CD8-positive, alpha-beta memory T cell (primary cell): ENCODE measurements at regions of chr17 and their contacts with region 1.

Region 1: DNA sequence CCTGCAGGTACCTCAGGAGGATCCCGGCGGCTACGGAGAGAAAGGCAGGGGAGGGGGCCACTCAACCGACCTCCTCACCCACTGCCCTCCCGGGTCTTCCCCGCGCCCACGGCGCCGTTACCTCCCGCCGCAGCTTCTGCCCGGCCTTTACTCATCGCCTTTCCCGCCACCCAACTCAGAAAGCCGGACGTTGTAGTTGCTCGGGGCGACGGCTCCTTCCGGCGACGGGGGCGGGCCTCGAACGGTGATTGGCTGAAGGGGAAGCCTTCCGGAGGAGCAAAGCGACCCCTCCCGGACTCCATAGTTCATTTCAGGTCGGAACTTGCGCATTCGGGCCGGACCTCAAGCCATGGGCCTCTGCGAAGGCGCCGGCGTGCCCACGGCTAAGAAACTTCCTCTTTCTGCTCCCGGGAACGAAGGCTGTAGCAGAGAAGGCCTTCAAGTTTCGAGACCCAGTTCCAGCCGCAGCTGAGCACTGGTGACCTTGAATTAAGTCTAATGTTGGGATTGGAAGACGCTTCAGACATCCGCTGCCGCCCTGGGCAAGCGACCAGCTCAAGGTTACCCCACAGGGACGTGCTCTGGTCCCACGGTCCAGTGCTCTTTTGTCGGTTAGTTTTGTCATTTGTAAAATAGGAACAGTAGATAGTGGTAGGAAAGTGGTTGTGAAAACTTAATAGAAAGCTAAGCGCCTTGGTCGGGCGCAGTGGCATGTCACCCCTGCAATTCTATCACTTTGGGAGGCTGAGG is at the start of gene PSMC3IP:
- DNase-seq: peak; percentile 82 to 93 (median 89)
- H3K4me3 ChIP-seq: peak within 1 kb of the TSS; percentile 96
- H3K4me3 Mint-ChIP-seq: peak within 1 kb of the TSS; percentile 89 to 99 (median 98)
- H3K27ac ChIP-seq: peak within 1 kb of the TSS; percentile 85
- H3K27ac Mint-ChIP-seq: peak within 1 kb of the TSS; percentile 74 to 99 (median 97)
- H3K4me1 ChIP-seq: peaks cover 13% of the 10 kb centered on the region
- H3K4me1 Mint-ChIP-seq: peaks cover 30 to 34% (median 31%) of the 10 kb centered on the region in 3 donors
- H3K27me3 ChIP-seq: no peaks in the 10 kb centered on the region
- H3K27me3 Mint-ChIP-seq: peaks cover 0 to 1% of the 10 kb centered on the region in 2 donors
- total RNA-seq, gene PSMC3IP: 35.9 to 36.2 TPM

Region 2: GRCh38 chr17:42493319-42493718 is 84.4 kb before region 1 on chr17:
- CTCF ChIA-PET with region 1: no interaction called
- POLR2A ChIA-PET with region 1: no interaction called
- DNase-seq: no peak
- H3K4me3 ChIP-seq: no peak overlapping the region
- H3K4me3 Mint-ChIP-seq: no peak overlapping the region
- H3K27ac ChIP-seq: no peak overlapping the region
- H3K27ac Mint-ChIP-seq: no peak overlapping the region
- H3K4me1 ChIP-seq: peaks cover 2% of the 10 kb centered on the region
- H3K4me1 Mint-ChIP-seq: peaks cover 21 to 27% (median 21%) of the 10 kb centered on the region in 3 donors
- H3K27me3 ChIP-seq: no peaks in the 10 kb centered on the region
- H3K27me3 Mint-ChIP-seq: peaks cover 6 to 11% of the 10 kb centered on the region in 2 donors

Region 3: GRCh38 chr17:42548070-42548837 is 29.5 kb before region 1 on chr17:
- CTCF ChIA-PET with region 1: interaction called, 12 read pairs
- POLR2A ChIA-PET with region 1: interaction called, 3 read pairs
- DNase-seq: peak; percentile 57 to 83 (median 69)
- H3K4me3 ChIP-seq: no peak overlapping the region
- H3K4me3 Mint-ChIP-seq: peak overlapping the region in 4 of 7 donors; percentile 22 to 59 (median 43)
- H3K27ac ChIP-seq: no peak overlapping the region
- H3K27ac Mint-ChIP-seq: no peak overlapping the region
- H3K4me1 ChIP-seq: peaks cover 5% of the 10 kb centered on the region
- H3K4me1 Mint-ChIP-seq: peaks cover 10 to 25% (median 14%) of the 10 kb centered on the region in 3 donors
- H3K27me3 ChIP-seq: no peaks in the 10 kb centered on the region
- H3K27me3 Mint-ChIP-seq: no peaks in the 10 kb centered on the region

Region 4: GRCh38 chr17:42566883-42567573 is 10.7 kb before region 1 on chr17 and contains the start of gene MLX:
- CTCF ChIA-PET with region 1: interaction called, 23 read pairs
- POLR2A ChIA-PET with region 1: interaction called, 12 read pairs
- DNase-seq: peak; percentile 89 to 95 (median 91)
- H3K4me3 ChIP-seq: peak within 1 kb of the TSS; percentile 78
- H3K4me3 Mint-ChIP-seq: peak within 1 kb of the TSS; percentile 93 to 96 (median 95)
- H3K27ac ChIP-seq: peak within 1 kb of the TSS; percentile 66
- H3K27ac Mint-ChIP-seq: peak within 1 kb of the TSS; percentile 88 to 97 (median 94)
- H3K4me1 ChIP-seq: peaks cover 46% of the 10 kb centered on the region
- H3K4me1 Mint-ChIP-seq: peaks cover 31 to 53% (median 37%) of the 10 kb centered on the region in 3 donors
- H3K27me3 ChIP-seq: no peaks in the 10 kb centered on the region
- H3K27me3 Mint-ChIP-seq: no peaks in the 10 kb centered on the region
- total RNA-seq, gene MLX: 61.8 to 62.3 TPM

Region 5: GRCh38 chr17:42653179-42654124 is 75.7 kb after region 1 on chr17:
- CTCF ChIA-PET with region 1: no interaction called
- POLR2A ChIA-PET with region 1: no interaction called
- DNase-seq: no peak
- H3K4me3 ChIP-seq: no peak overlapping the region
- H3K4me3 Mint-ChIP-seq: peak overlapping the region in 1 of 7 donors; percentile 54
- H3K27ac ChIP-seq: no peak overlapping the region
- H3K27ac Mint-ChIP-seq: no peak overlapping the region
- H3K4me1 ChIP-seq: peaks cover 1% of the 10 kb centered on the region
- H3K4me1 Mint-ChIP-seq: peaks cover 5 to 7% (median 7%) of the 10 kb centered on the region in 3 donors
- H3K27me3 ChIP-seq: no peaks in the 10 kb centered on the region
- H3K27me3 Mint-ChIP-seq: peaks cover 21 to 22% of the 10 kb centered on the region in 2 donors

Region 6: GRCh38 chr17:42677008-42677857 is 99.5 kb after region 1 on chr17:
- CTCF ChIA-PET with region 1: interaction called, 44 read pairs
- POLR2A ChIA-PET with region 1: interaction called, 8 read pairs
- DNase-seq: peak; percentile 91 to 97 (median 95)
- H3K4me3 ChIP-seq: peak overlapping the region; percentile 74
- H3K4me3 Mint-ChIP-seq: peak overlapping the region; percentile 87 to 91 (median 88)
- H3K27ac ChIP-seq: peak overlapping the region; percentile 73
- H3K27ac Mint-ChIP-seq: peak overlapping the region; percentile 21 to 98 (median 78)
- H3K4me1 ChIP-seq: peaks cover 72% of the 10 kb centered on the region
- H3K4me1 Mint-ChIP-seq: peaks cover 44 to 66% (median 56%) of the 10 kb centered on the region in 3 donors
- H3K27me3 ChIP-seq: peaks cover 53% of the 10 kb centered on the region
- H3K27me3 Mint-ChIP-seq: peaks cover 40 to 41% of the 10 kb centered on the region in 2 donors

Region 7: DNA sequence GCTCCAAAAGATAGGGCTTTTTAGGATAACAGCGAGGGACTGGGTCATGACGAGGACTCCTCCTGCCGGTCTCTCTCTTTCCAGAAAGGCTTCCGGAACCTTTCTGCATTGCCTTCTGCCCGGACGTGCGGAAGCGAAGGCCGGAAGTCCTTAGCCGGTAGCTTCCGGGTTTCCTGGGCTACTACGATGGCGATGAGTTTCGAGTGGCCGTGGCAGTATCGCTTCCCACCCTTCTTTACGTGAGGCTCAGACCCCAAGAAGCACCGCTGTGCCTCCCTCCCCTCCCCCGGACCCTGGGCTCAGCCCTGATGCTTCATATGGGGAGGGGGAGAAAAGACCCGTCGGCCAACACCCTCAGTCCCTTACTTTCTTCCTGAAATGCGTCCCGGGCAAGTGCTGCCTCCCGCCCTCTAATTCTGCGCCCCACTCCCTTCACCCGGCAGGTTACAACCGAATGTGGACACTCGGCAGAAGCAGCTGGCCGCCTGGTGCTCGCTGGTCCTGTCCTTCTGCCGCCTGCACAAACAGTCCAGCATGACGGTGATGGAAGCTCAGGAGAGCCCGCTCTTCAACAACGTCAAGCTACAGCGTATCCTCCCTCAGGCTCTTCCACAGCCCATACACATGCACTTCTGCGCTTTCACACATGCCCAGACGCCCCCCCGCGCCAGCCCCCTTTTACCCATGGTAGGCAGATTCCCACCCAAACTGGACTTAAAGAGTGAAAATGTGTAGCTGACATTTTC is 195.8 kb after region 1 on chr17 and contains the start of gene VPS25:
- CTCF ChIA-PET with region 1: interaction called, 10 read pairs
- POLR2A ChIA-PET with region 1: no interaction called
- DNase-seq: peak; percentile 57 to 84 (median 68)
- H3K4me3 ChIP-seq: peak within 1 kb of the TSS; percentile 99
- H3K4me3 Mint-ChIP-seq: peak within 1 kb of the TSS; percentile 91 to 99 (median 98)
- H3K27ac ChIP-seq: peak within 1 kb of the TSS; percentile 91
- H3K27ac Mint-ChIP-seq: peak within 1 kb of the TSS; percentile 88 to 100 (median 99)
- H3K4me1 ChIP-seq: peaks cover 11% of the 10 kb centered on the region
- H3K4me1 Mint-ChIP-seq: peaks cover 19 to 34% (median 30%) of the 10 kb centered on the region in 3 donors
- H3K27me3 ChIP-seq: no peaks in the 10 kb centered on the region
- H3K27me3 Mint-ChIP-seq: peaks cover 0 to 2% of the 10 kb centered on the region in 2 donors
- total RNA-seq, gene VPS25: 101 to 108 TPM